Activated CD4-positive, alpha-beta T cell treated with anti-CD3 and anti-CD28 coated beads, Interleukin-2, amount 10 ng/mL, durations not matched to agents 24 days and 14 days (primary cell): ENCODE measurements at regions of chr19 and their contacts with region 1.

Region 1: GRCh38 chr19:51926784-51927742 is at the start of gene ZNF613:
- DNase-seq: peak; percentile 93
- H3K4me3 Mint-ChIP-seq: peak within 1 kb of the TSS; percentile 100
- H3K27ac Mint-ChIP-seq: peak within 1 kb of the TSS; percentile 97
- H3K4me1 Mint-ChIP-seq: peaks cover 19% of the 10 kb centered on the region
- H3K27me3 Mint-ChIP-seq: no peaks in the 10 kb centered on the region
- total RNA-seq, gene ZNF613: 3.5 and 5.0 TPM in 2 replicates

Region 2: DNA sequence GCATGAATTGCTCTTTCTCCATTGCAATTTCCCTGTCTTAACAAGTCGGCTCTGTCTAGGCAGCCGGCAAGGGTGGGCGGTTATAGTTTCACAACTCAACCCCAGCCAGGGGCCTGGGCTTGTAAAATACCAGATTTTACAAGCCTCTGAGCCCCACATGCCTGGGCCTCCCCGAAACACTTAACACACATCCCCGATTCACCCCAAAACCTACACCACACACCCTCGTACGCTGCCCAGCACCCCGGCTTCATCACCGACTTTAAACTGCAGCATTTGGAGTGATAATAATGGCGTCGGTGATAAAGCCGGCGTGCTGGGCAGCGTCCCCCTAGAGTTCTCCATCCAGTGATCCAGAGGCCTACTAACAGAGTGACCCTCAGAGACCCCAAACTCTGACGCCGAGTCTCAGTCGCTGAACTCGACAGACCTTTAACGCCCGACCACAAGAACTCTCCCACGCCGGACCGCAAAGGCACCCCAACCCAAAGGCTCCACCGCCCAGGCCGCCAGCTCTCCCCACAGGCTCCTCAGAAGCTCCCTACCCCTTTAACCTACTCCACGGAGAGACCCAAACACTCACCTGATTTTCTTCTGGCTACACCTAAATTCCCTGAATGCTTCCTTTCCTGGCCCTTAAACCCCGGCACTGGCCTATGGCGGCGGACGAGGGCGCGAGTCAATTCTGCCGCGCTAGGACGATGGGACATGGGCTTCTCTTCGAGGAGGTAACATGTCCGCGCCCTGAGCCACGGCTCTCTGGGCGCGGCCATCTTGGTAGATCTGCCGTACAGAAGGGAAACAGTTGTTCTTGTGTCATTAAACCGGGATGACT is 22.5 kb before region 1 on chr19 and contains the start of gene ZNF649:
- intact Hi-C with region 1: loop called (anchors 1 kb)
- DNase-seq: peak; percentile 93
- H3K4me3 Mint-ChIP-seq: peak within 1 kb of the TSS; percentile 87
- H3K27ac Mint-ChIP-seq: peak within 1 kb of the TSS; percentile 95
- H3K4me1 Mint-ChIP-seq: peaks cover 11% of the 10 kb centered on the region
- H3K27me3 Mint-ChIP-seq: peaks cover 4% of the 10 kb centered on the region
- total RNA-seq, gene ZNF649: 10.7 and 11.0 TPM in 2 replicates

Region 3: DNA sequence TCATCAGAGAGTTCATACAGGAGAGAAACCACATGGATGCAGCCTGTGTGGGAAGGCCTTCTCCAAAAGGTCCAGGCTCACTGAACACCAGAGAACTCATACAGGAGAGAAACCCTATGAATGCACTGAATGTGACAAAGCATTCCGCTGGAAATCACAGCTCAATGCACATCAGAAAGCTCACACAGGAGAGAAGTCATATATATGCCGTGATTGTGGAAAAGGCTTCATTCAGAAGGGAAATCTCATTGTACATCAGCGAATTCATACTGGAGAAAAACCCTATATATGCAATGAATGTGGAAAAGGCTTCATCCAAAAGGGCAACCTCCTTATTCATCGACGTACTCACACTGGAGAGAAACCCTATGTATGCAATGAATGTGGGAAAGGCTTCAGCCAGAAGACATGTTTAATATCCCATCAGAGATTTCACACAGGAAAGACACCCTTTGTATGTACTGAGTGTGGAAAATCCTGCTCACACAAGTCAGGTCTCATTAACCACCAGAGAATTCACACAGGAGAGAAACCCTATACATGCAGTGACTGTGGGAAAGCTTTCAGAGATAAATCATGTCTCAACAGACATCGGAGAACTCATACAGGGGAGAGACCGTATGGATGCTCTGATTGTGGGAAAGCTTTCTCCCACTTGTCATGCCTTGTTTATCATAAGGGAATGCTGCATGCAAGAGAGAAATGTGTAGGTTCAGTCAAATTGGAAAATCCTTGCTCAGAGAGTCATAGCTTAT is 17.9 kb after region 1 on chr19:
- intact Hi-C with region 1: no loop called
- DNase-seq: no peak
- H3K4me3 Mint-ChIP-seq: no peak overlapping the region
- H3K27ac Mint-ChIP-seq: no peak overlapping the region
- H3K4me1 Mint-ChIP-seq: no peaks in the 10 kb centered on the region
- H3K27me3 Mint-ChIP-seq: no peaks in the 10 kb centered on the region

Region 4: GRCh38 chr19:51986309-51987291 is 59.5 kb after region 1 on chr19 and contains the start of gene ZNF350:
- intact Hi-C with region 1: loop called (anchors 1 kb)
- DNase-seq: peak; percentile 96
- H3K4me3 Mint-ChIP-seq: peak within 1 kb of the TSS; percentile 91
- H3K27ac Mint-ChIP-seq: peak within 1 kb of the TSS; percentile 92
- H3K4me1 Mint-ChIP-seq: peaks cover 8% of the 10 kb centered on the region
- H3K27me3 Mint-ChIP-seq: no peaks in the 10 kb centered on the region
- total RNA-seq, gene ZNF350: 7.4 and 8.4 TPM in 2 replicates

Region 5: GRCh38 chr19:52007806-52008557 is 80.9 kb after region 1 on chr19 and contains the start of gene ZNF615:
- intact Hi-C with region 1: loop called (anchors 2 kb)
- DNase-seq: peak; percentile 96
- H3K4me3 Mint-ChIP-seq: peak within 1 kb of the TSS; percentile 91
- H3K27ac Mint-ChIP-seq: peak within 1 kb of the TSS; percentile 98
- H3K4me1 Mint-ChIP-seq: peaks cover 14% of the 10 kb centered on the region
- H3K27me3 Mint-ChIP-seq: no peaks in the 10 kb centered on the region
- total RNA-seq, gene ZNF615: 5.9 and 6.9 TPM in 2 replicates

Region 6: GRCh38 chr19:52028027-52028779 is 101.1 kb after region 1 on chr19 and contains the start of gene ZNF614:
- intact Hi-C with region 1: loop called (anchors 1 kb)
- DNase-seq: peak; percentile 96
- H3K4me3 Mint-ChIP-seq: peak within 1 kb of the TSS; percentile 94
- H3K27ac Mint-ChIP-seq: peak within 1 kb of the TSS; percentile 95
- H3K4me1 Mint-ChIP-seq: peaks cover 15% of the 10 kb centered on the region
- H3K27me3 Mint-ChIP-seq: no peaks in the 10 kb centered on the region
- total RNA-seq, gene ZNF614: 11.0 and 12.7 TPM in 2 replicates

Region 7: GRCh38 chr19:52139252-52140031 is 212.4 kb after region 1 on chr19 and contains the start of gene ZNF616:
- intact Hi-C with region 1: loop called (anchors 1 kb)
- DNase-seq: peak; percentile 99
- H3K4me3 Mint-ChIP-seq: peak within 1 kb of the TSS; percentile 98
- H3K27ac Mint-ChIP-seq: peak within 1 kb of the TSS; percentile 90
- H3K4me1 Mint-ChIP-seq: peaks cover 17% of the 10 kb centered on the region
- H3K27me3 Mint-ChIP-seq: no peaks in the 10 kb centered on the region
- total RNA-seq, gene ZNF616: 6.1 and 7.1 TPM in 2 replicates